Aorta (tissue), 5 donors: ENCODE measurements at regions of chr1 and their contacts with region 1.

Region 1: DNA sequence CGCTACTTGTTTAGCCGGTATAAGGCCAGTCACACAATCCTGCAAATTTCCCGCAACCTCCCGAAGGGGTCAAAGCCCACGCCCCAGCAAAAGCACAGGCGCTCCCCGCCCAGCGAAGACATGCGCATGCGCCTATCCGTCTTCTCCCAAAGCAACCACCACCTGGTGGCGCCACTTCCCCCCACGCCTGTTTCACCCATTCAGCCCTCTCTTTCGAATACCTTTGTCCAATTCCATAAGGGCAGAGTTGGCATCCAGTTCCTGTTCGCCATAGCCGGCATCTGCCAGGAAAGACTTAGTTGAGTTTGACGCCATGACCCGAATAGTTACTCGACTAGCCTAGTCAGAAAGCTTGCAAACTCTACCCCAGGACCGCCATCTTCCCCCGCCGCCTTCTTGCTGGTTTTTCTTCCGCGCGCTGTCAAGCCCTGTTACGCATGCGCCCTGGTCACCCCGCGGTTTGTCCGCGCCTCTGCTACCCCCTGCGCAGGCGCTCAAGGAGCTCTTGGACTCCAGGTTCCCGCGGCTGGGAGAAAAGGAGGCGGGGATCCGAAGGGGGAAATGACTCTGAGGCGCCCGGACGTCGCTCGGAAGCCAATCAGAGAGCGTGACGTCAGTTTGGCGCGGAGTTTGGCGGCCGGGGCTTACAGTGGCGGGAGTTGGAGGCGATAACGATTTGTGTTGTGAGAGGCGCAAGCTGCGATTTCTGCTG is at the starts of genes DTL and INTS7:
- DNase-seq: peak; percentile 99
- ATAC-seq: peak; percentile 98
- H3K4me3 ChIP-seq: peak within 1 kb of the TSS; percentile 22 to 56
- H3K27ac ChIP-seq: peak within 1 kb of the TSS in 1 of 2 donors; percentile 52
- H3K4me1 ChIP-seq: peaks cover 0 to 3% of the 10 kb centered on the region in 2 donors
- H3K27me3 ChIP-seq: no peaks in the 10 kb centered on the region
- total RNA-seq, gene DTL: 1.2 to 1.3 TPM
- total RNA-seq, gene INTS7: 7.4 to 9.4 TPM

Region 2: GRCh38 chr1:211415700-211416099 is 619.6 kb before region 1 on chr1:
- intact Hi-C with region 1: no loop called
- DNase-seq: no peak
- ATAC-seq: no peak
- H3K4me3 ChIP-seq: no peak overlapping the region
- H3K27ac ChIP-seq: no peak overlapping the region
- H3K4me1 ChIP-seq: peaks cover 0 to 2% of the 10 kb centered on the region in 2 donors
- H3K27me3 ChIP-seq: no peaks in the 10 kb centered on the region

Region 3: GRCh38 chr1:211675230-211676105 is 359.8 kb before region 1 on chr1 and contains the start of gene NEK2:
- intact Hi-C with region 1: loop called (anchors 5 to 10 kb)
- DNase-seq: peak; percentile 93 to 95
- ATAC-seq: peak; percentile 95
- H3K4me3 ChIP-seq: peak within 1 kb of the TSS in 1 of 2 donors; percentile 22
- H3K27ac ChIP-seq: no peak within 1 kb of the TSS
- H3K4me1 ChIP-seq: no peaks in the 10 kb centered on the region
- H3K27me3 ChIP-seq: no peaks in the 10 kb centered on the region
- total RNA-seq, gene NEK2: 1.0 TPM in 1 of 2 donors, not detected in the other

Region 4: DNA sequence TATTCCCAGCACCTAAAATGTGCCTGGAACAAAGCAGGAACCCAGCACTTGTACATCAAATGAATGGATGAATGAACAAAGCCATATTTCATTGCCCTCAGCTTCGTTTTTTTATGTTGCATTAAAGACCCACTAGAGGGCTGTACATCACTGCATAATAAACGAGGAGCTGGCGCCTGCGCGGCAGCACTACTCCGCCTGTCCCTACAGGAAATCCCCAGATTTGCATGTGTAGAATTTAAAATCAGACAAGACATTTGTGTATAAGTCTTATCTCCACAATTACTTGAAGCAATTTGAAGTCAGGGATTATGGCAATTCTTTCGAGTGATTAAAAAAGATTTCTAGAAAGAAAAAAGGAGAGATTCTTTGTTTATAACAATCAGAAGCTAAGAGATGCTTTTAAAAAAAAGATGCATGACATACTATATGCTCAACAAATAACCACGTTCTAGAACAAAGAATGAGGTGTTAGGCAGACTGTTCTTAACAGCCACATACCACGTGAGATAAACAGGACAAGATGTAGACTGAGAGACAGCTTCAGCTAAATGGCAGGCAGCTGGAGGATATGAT is 354.4 kb before region 1 on chr1:
- intact Hi-C with region 1: loop called (anchors 5 to 10 kb)
- DNase-seq: peak; percentile 82 to 84
- ATAC-seq: peak; percentile 91
- H3K4me3 ChIP-seq: no peak overlapping the region
- H3K27ac ChIP-seq: no peak overlapping the region
- H3K4me1 ChIP-seq: no peaks in the 10 kb centered on the region
- H3K27me3 ChIP-seq: no peaks in the 10 kb centered on the region

Region 5: DNA sequence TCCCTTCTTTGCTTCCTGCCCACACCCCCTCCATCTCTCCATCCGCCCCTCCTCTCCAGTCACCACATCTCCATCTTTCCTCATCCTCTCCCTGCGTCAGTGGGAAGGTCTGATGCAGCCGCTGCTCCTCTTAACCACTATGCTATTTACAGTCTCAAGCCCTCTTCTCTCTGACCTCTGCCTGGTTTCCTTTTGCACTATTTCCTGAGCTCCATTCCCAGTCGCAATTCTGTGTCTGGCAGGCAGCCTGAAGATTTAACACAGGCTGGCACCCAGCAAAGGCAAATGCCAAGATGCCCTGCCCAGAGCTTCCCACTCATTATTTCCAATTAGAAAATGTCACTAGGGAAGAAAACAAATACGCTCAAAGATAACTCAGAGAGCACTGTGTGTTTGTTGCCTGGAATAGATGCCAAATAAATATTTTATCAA is 115.1 kb before region 1 on chr1:
- intact Hi-C with region 1: no loop called
- DNase-seq: peak; percentile 73 to 79
- ATAC-seq: peak; percentile 77
- H3K4me3 ChIP-seq: no peak overlapping the region
- H3K27ac ChIP-seq: no peak overlapping the region
- H3K4me1 ChIP-seq: no peaks in the 10 kb centered on the region
- H3K27me3 ChIP-seq: no peaks in the 10 kb centered on the region